ENCODE measurements at regions of chr12 and their contacts with region 1.

Region 1: DNA sequence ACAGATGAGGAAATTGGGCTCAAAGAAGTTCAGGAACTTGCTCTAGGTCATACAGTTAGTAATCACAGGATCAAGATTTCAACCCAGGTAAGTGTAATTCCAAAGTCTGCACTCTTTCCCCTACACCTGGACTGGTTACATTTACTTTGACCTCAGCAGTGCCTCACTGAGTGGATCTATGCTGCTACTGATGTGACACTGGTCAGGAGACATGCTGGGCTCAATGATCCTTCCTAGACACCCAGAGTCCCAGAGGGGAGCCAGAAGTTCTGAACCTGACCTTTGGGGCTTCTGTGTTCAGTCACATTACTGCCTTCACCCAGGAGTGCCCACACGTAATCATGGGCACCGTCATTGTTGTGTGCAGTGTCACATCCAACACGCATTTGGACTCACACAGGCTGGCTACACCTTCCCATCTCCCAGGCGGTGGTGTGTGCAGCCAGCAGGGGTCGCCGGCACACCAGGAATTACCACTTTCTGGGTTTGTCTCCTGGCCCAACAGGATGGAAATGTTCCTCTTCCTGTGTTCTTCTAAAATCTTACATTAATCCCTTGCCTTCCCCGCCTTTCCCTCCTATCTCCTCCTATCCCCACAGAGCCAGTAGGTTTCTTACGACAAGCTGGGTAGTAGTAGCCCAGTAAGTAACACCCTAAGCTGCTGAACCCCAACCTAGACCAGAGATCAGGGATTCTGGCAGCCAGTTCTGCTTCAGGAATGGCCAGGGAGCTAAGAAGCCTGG is 25.6 kb downstream of the CALCOCO1 start:
- DNase-seq: peak; percentile 90
- ATAC-seq: peak; percentile 94
- H3K4me3 Mint-ChIP-seq: no peak overlapping the region
- H3K27ac Mint-ChIP-seq: no peak overlapping the region
- H3K4me1 Mint-ChIP-seq: peaks cover 21% of the 10 kb centered on the region
- H3K27me3 Mint-ChIP-seq: peaks cover 60% of the 10 kb centered on the region
- CTCF ChIP-seq: peak; percentile 77

Region 2: GRCh38 chr12:53727310-53728041 is 25.8 kb after region 1 on chr12 and contains the start of gene CALCOCO1:
- CTCF ChIA-PET with region 1: interaction called, 21 read pairs
- POLR2A ChIA-PET with region 1: interaction called, 4 read pairs
- DNase-seq: peak; percentile 98
- ATAC-seq: peak; percentile 98
- H3K4me3 Mint-ChIP-seq: peak within 1 kb of the TSS; percentile 94
- H3K27ac Mint-ChIP-seq: peak within 1 kb of the TSS; percentile 88
- H3K4me1 Mint-ChIP-seq: peaks cover 27% of the 10 kb centered on the region
- H3K27me3 Mint-ChIP-seq: peaks cover 3% of the 10 kb centered on the region; the same call in 1 of the 2 replicates
- CTCF ChIP-seq: no peak
- total RNA-seq, gene CALCOCO1: 21.2 to 28.2 TPM (median 27.0 TPM) in 3 replicates

Region 3: DNA sequence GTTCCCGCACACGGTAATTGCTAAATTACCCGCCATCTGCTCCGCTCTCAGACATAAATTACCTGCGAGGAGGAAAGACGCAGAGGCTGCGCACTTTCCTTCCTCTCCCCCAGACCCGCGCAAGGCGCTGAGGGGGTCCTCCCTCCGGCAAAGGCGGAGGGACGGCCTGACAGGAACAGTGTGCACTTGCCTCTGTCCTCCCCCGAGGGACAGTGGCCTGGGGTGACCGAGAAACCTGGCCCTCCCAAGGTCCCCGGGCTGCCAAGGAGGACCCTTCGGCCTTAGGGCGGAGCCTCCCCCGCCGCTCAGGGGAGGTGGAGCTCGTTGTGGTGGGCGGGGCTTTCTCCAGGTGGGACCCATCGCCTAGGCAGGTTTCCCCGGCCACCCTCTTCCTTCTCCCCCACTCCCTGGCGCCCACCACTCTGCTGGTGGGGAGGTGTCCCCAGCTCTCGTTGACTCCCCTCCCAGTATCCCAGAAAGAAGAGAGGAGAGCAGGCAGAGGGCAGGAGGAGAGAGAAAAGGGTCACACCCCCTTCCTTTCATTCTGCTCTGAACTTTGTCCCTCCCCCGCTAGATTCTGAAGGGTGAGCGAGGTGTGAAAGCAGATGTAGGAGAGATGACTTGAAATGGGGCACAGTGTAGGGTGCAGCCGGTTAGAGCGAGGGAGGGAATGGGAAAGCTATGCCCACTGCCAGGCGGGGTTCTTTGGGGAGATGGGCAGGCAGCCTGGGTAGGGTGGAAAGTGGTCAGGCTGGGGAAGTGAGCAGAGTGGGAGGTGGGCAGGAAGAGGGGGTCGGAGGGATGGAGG is 36.9 kb after region 1 on chr12:
- CTCF ChIA-PET with region 1: interaction called, 327 read pairs
- POLR2A ChIA-PET with region 1: interaction called, 3 read pairs
- DNase-seq: peak; percentile 85
- ATAC-seq: peak; percentile 88
- H3K4me3 Mint-ChIP-seq: no peak overlapping the region
- H3K27ac Mint-ChIP-seq: no peak overlapping the region
- H3K4me1 Mint-ChIP-seq: peaks cover 29% of the 10 kb centered on the region
- H3K27me3 Mint-ChIP-seq: peaks cover 8% of the 10 kb centered on the region
- CTCF ChIP-seq: no peak

Region 4: GRCh38 chr12:53781228-53781801 is 79.6 kb after region 1 on chr12:
- CTCF ChIA-PET with region 1: no interaction called
- POLR2A ChIA-PET with region 1: no interaction called
- DNase-seq: no peak
- ATAC-seq: peak; percentile 77
- H3K4me3 Mint-ChIP-seq: no peak overlapping the region
- H3K27ac Mint-ChIP-seq: no peak overlapping the region
- H3K4me1 Mint-ChIP-seq: peaks cover 19% of the 10 kb centered on the region
- H3K27me3 Mint-ChIP-seq: no peaks in the 10 kb centered on the region; the same call in 1 of the 2 replicates
- CTCF ChIP-seq: no peak

Region 5: GRCh38 chr12:53806721-53807120 is 105.0 kb after region 1 on chr12:
- CTCF ChIA-PET with region 1: interaction called, 12 read pairs
- POLR2A ChIA-PET with region 1: no interaction called
- DNase-seq: no peak
- ATAC-seq: no peak
- H3K4me3 Mint-ChIP-seq: no peak overlapping the region
- H3K27ac Mint-ChIP-seq: no peak overlapping the region
- H3K4me1 Mint-ChIP-seq: peaks cover 16% of the 10 kb centered on the region
- H3K27me3 Mint-ChIP-seq: peaks cover 13% of the 10 kb centered on the region
- CTCF ChIP-seq: no peak

Region 6: GRCh38 chr12:53892760-53893159 is 191.1 kb after region 1 on chr12:
- CTCF ChIA-PET with region 1: no interaction called
- POLR2A ChIA-PET with region 1: no interaction called
- DNase-seq: no peak
- ATAC-seq: no peak
- H3K4me3 Mint-ChIP-seq: no peak overlapping the region
- H3K27ac Mint-ChIP-seq: no peak overlapping the region
- H3K4me1 Mint-ChIP-seq: peaks cover 5% of the 10 kb centered on the region
- H3K27me3 Mint-ChIP-seq: peaks cover 39% of the 10 kb centered on the region
- CTCF ChIP-seq: no peak

Measured in WTC11 (cell line).